ENCODE measurements at regions of chr19 and their contacts with region 1.

Region 1: DNA sequence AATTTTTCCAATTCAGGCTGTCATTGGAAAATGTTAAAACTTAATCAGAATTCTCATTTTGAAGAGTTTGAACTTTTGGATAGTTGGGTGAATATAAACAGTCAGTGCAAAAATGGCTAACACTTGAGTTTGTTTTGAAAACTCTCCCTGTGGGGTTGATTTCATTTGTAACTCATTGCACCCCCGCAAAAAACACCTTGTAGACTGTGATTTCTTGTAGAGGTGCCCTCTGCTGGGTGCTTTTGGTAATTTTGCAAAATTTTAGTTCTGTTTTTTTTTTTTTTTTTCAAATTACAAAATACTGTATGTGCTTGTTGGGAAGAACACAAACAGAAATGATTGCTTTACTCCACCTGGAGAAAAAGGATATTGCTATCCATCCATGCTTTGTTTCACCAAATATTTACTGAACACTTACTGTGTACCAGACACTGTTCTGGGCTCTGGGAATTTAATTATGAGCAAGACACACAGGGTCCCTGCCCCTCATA is 28.2 kb upstream of the GPI start:
- DNase-seq: peak; percentile 68
- H3K4me3 ChIP-seq: no peak overlapping the region
- H3K27ac ChIP-seq: peak overlapping the region; percentile 4
- H3K4me1 ChIP-seq: peaks cover 28% of the 10 kb centered on the region
- H3K27me3 ChIP-seq: no peaks in the 10 kb centered on the region
- CTCF ChIP-seq: peak; percentile 40 to 43
- POLR2A ChIP-seq: no peak

Region 2: GRCh38 chr19:34253699-34254551 is 82.9 kb before region 1 on chr19:
- CTCF ChIA-PET with region 1: interaction called, 4 read pairs
- POLR2A ChIA-PET with region 1: no interaction called
- dilution Hi-C with region 1: no loop called
- intact Hi-C with region 1: loop called (anchors 1 kb)
- DNase-seq: peak; percentile 60
- H3K4me3 ChIP-seq: peak overlapping the region; percentile 70 to 87 (median 84)
- H3K27ac ChIP-seq: peak overlapping the region; percentile 86
- H3K4me1 ChIP-seq: peaks cover 10% of the 10 kb centered on the region
- H3K27me3 ChIP-seq: no peaks in the 10 kb centered on the region
- CTCF ChIP-seq: no peak
- POLR2A ChIP-seq: peak; percentile 69

Region 3: GRCh38 chr19:34313188-34313587 is 23.6 kb before region 1 on chr19:
- CTCF ChIA-PET with region 1: interaction called, 4 read pairs
- POLR2A ChIA-PET with region 1: interaction called, 5 read pairs
- dilution Hi-C with region 1: no loop called
- intact Hi-C with region 1: loop called (anchors 1 kb)
- DNase-seq: peak; percentile 66
- H3K4me3 ChIP-seq: no peak overlapping the region
- H3K27ac ChIP-seq: peak overlapping the region; percentile 71
- H3K4me1 ChIP-seq: peaks cover 35% of the 10 kb centered on the region
- H3K27me3 ChIP-seq: no peaks in the 10 kb centered on the region
- CTCF ChIP-seq: no peak
- POLR2A ChIP-seq: peak; percentile 39

Region 4: DNA sequence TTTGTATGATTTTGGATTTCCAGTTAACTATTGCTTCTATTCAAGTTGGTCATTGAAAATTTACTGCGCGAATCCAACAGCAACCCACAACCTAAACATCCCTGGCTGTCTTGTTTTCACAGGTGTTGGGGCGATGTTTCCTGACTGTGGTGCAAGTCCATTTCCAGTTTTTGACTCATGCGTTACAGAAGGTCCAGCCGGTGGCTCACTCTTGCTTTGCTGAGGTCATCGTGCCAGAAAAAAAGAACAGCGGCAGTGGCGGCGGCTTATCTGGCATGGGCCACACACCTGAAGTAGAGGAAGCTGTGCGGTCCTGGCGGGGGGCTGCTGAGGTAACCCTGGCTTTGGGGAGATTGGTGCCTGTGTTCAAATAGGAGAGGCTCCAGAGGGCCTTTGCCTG is 17.0 kb before region 1 on chr19:
- CTCF ChIA-PET with region 1: interaction called, 7 read pairs
- POLR2A ChIA-PET with region 1: interaction called, 5 read pairs
- dilution Hi-C with region 1: no loop called
- intact Hi-C with region 1: loop called (anchors 1 kb)
- DNase-seq: peak; percentile 94
- H3K4me3 ChIP-seq: no peak overlapping the region
- H3K27ac ChIP-seq: peak overlapping the region; percentile 98
- H3K4me1 ChIP-seq: peaks cover 49% of the 10 kb centered on the region
- H3K27me3 ChIP-seq: no peaks in the 10 kb centered on the region
- CTCF ChIP-seq: no peak
- POLR2A ChIP-seq: no peak

Region 5: GRCh38 chr19:34386645-34387445 is 50.0 kb after region 1 on chr19:
- CTCF ChIA-PET with region 1: no interaction called
- POLR2A ChIA-PET with region 1: no interaction called
- dilution Hi-C with region 1: no loop called
- intact Hi-C with region 1: no loop called
- DNase-seq: no peak
- H3K4me3 ChIP-seq: no peak overlapping the region
- H3K27ac ChIP-seq: no peak overlapping the region
- H3K4me1 ChIP-seq: no peaks in the 10 kb centered on the region
- H3K27me3 ChIP-seq: no peaks in the 10 kb centered on the region
- CTCF ChIP-seq: no peak
- POLR2A ChIP-seq: no peak

Region 6: GRCh38 chr19:34461375-34462100 is 124.7 kb after region 1 on chr19:
- CTCF ChIA-PET with region 1: no interaction called
- POLR2A ChIA-PET with region 1: no interaction called
- dilution Hi-C with region 1: no loop called
- intact Hi-C with region 1: no loop called
- DNase-seq: no peak
- H3K4me3 ChIP-seq: no peak overlapping the region
- H3K27ac ChIP-seq: no peak overlapping the region
- H3K4me1 ChIP-seq: no peaks in the 10 kb centered on the region
- H3K27me3 ChIP-seq: no peaks in the 10 kb centered on the region
- CTCF ChIP-seq: no peak
- POLR2A ChIP-seq: no peak

Region 7: GRCh38 chr19:34502582-34503411 is 166.0 kb after region 1 on chr19:
- CTCF ChIA-PET with region 1: no interaction called
- POLR2A ChIA-PET with region 1: no interaction called
- dilution Hi-C with region 1: no loop called
- intact Hi-C with region 1: no loop called
- DNase-seq: no peak
- H3K4me3 ChIP-seq: no peak overlapping the region
- H3K27ac ChIP-seq: no peak overlapping the region
- H3K4me1 ChIP-seq: no peaks in the 10 kb centered on the region
- H3K27me3 ChIP-seq: no peaks in the 10 kb centered on the region
- CTCF ChIP-seq: no peak
- POLR2A ChIP-seq: no peak

Measured in endothelial cell of umbilical vein (primary cell).